Naive thymus-derived CD4-positive, alpha-beta T cell (primary cell): ENCODE measurements at regions of chr6 and their contacts with region 1.

Region 1: GRCh38 chr6:27479319-27480182 is 6.6 kb upstream of the ZNF184 start:
- DNase-seq: peak; percentile 84 to 97 (median 95)
- ATAC-seq: peak; percentile 83
- H3K4me3 ChIP-seq: peak overlapping the region; percentile 95
- H3K4me3 Mint-ChIP-seq: no peak overlapping the region
- H3K27ac ChIP-seq: peak overlapping the region; percentile 97
- H3K27ac Mint-ChIP-seq: no peak overlapping the region
- H3K4me1 ChIP-seq: peaks cover 9 to 12% of the 10 kb centered on the region in 2 donors
- H3K4me1 Mint-ChIP-seq: peaks cover 0 to 9% (median 5%) of the 10 kb centered on the region in 7 donors
- H3K27me3 ChIP-seq: no peaks in the 10 kb centered on the region
- H3K27me3 Mint-ChIP-seq: peaks cover 0 to 17% (median 0%) of the 10 kb centered on the region in 5 donors

Region 2: DNA sequence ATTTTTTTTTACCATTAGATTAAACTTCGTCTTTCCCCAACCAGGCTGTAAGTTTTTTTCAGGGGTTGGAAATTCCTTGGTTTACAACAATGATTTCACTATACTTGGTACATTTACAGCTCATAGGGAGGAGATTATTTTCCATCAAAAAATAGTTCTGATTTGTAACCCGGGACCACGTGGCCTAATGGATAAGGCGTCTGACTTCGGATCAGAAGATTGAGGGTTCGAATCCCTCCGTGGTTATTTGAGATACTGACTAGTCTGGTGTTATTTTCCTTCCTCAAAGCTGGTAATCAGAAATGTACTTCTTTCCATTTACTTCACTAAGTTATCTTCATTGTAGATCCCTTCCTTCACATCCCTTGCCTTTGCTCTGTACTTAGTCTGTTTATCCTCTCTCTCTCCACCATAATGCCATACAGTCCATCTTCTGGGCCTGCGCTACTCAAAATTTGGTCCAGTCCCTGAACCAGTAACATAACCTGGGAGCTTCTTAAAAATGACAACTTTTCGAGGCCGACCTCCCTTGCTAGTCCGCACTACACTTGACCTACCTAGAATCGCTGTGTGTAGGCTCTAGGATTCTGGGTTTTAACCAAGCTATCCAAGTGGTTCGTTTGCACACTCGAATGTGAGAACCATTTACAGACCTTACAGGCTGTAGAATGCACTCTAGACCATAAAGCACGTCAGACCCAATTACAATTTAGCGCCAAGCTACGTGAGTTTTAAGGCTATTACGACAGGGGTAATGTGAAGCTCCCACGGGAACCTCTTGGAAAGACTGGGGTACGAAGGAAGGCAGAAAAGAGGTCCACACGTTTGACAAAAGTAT is 1156.7 kb before region 1 on chr6:
- CTCF ChIA-PET with region 1: no interaction called
- POLR2A ChIA-PET with region 1: no interaction called
- intact Hi-C with region 1: loop called in 1 of 2 experiments (anchors 5 kb)
- DNase-seq: peak in 8 of 9 donors; percentile 67 to 85 (median 79)
- ATAC-seq: peak; percentile 72
- H3K4me3 ChIP-seq: peak overlapping the region; percentile 82
- H3K4me3 Mint-ChIP-seq: peak overlapping the region; percentile 64 to 92 (median 88)
- H3K27ac ChIP-seq: peak overlapping the region; percentile 60
- H3K27ac Mint-ChIP-seq: peak overlapping the region; percentile 44 to 93 (median 89)
- H3K4me1 ChIP-seq: peaks cover 5 to 8% of the 10 kb centered on the region in 2 donors
- H3K4me1 Mint-ChIP-seq: peaks cover 2 to 58% (median 36%) of the 10 kb centered on the region in 7 donors
- H3K27me3 ChIP-seq: no peaks in the 10 kb centered on the region
- H3K27me3 Mint-ChIP-seq: peaks cover 5 to 21% (median 17%) of the 10 kb centered on the region in 5 donors

Region 3: DNA sequence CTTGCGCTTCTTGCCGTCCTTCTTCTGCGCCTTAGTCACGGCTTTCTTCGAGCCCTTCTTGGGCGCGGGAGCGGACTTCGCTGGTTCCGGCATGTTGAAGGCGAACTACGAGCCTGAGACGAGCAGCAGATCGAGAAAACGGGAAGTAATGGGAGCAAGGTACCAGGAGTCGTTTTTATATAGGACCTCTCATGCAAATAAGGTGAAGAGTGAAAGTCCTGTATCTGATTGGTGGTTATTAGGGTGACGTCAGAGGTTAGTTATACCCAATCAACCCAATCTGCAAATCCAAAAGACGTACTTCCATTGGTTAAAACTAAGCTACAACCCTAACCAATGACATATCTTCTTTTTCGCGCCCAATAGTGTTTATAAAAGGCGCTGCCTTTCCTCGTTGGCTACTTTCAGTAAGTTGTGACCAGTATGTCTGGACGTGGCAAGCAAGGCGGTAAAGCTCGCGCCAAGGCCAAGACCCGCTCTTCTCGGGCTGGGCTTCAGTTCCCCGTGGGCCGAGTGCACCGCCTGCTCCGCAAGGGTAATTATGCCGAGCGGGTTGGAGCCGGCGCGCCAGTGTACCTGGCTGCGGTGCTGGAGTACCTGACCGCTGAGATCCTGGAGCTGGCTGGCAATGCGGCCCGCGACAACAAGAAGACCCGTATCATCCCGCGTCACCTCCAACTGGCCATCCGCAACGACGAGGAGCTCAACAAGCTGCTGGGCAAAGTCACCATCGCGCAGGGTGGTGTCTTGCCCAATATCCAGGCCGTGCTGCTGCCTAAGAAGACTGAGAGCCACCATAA is 332.6 kb before region 1 on chr6:
- CTCF ChIA-PET with region 1: no interaction called
- POLR2A ChIA-PET with region 1: interaction called, 8 read pairs
- intact Hi-C with region 1: loop called (anchors 5 kb)
- DNase-seq: peak; percentile 71 to 96 (median 92)
- ATAC-seq: peak; percentile 92
- H3K4me3 ChIP-seq: peak overlapping the region; percentile 90
- H3K4me3 Mint-ChIP-seq: no peak overlapping the region
- H3K27ac ChIP-seq: peak overlapping the region; percentile 89
- H3K27ac Mint-ChIP-seq: no peak overlapping the region
- H3K4me1 ChIP-seq: peaks cover 6 to 7% of the 10 kb centered on the region in 2 donors
- H3K4me1 Mint-ChIP-seq: peaks cover 0 to 26% (median 14%) of the 10 kb centered on the region in 7 donors
- H3K27me3 ChIP-seq: no peaks in the 10 kb centered on the region
- H3K27me3 Mint-ChIP-seq: no peaks in the 10 kb centered on the region

Region 4: DNA sequence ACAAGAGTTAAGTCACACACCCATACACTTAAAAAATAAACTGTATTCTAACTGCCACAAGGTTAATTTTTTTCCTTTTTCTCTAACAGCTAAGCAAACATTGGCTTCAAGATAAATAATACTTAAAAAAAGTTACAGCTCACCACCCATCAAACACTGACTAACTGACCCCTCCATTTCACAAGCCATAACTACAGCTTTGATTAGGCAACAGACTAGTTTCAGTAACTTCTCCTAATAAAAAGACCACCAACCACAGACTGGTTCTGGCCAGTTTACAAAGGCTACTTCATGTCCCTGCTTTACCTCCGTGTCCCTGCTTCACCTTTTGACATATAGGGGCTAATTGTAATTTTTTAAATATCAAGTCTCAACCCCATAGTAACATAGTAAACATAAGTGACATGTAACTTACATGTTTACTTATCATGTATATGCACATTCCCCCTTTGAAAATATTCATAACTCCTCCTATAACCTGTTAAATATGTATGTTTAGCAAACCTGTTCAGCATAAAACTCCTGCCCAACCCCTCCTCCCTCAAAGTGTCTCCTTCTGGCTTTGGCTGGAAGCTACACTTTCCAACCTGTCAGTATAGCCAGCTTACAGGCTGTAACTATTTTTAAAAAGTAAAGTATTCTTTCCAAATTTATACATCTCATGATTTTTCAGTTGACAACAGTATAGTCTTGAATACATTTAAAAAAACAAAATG is 152.4 kb before region 1 on chr6:
- CTCF ChIA-PET with region 1: no interaction called
- POLR2A ChIA-PET with region 1: no interaction called
- intact Hi-C with region 1: no loop called
- DNase-seq: no peak
- ATAC-seq: no peak
- H3K4me3 ChIP-seq: no peak overlapping the region
- H3K4me3 Mint-ChIP-seq: no peak overlapping the region
- H3K27ac ChIP-seq: no peak overlapping the region
- H3K27ac Mint-ChIP-seq: no peak overlapping the region
- H3K4me1 ChIP-seq: no peaks in the 10 kb centered on the region
- H3K4me1 Mint-ChIP-seq: peaks cover 0 to 4% (median under 1%) of the 10 kb centered on the region in 7 donors
- H3K27me3 ChIP-seq: peaks cover 2 to 3% of the 10 kb centered on the region in 2 donors
- H3K27me3 Mint-ChIP-seq: peaks cover 22 to 66% (median 50%) of the 10 kb centered on the region in 5 donors

Region 5: GRCh38 chr6:27388293-27389197 is 91.0 kb before region 1 on chr6 and contains the start of gene ZNF391:
- CTCF ChIA-PET with region 1: no interaction called
- POLR2A ChIA-PET with region 1: interaction called, 10 read pairs
- intact Hi-C with region 1: loop called (anchors 1 to 2 kb)
- DNase-seq: peak; percentile 46 to 77 (median 67)
- ATAC-seq: peak; percentile 90
- H3K4me3 ChIP-seq: peak within 1 kb of the TSS; percentile 92
- H3K4me3 Mint-ChIP-seq: peak within 1 kb of the TSS; percentile 95 to 99 (median 98)
- H3K27ac ChIP-seq: peak within 1 kb of the TSS; percentile 78
- H3K27ac Mint-ChIP-seq: peak within 1 kb of the TSS; percentile 85 to 96 (median 93)
- H3K4me1 ChIP-seq: peaks cover 4 to 9% of the 10 kb centered on the region in 2 donors
- H3K4me1 Mint-ChIP-seq: peaks cover 9 to 31% (median 18%) of the 10 kb centered on the region in 7 donors
- H3K27me3 ChIP-seq: no peaks in the 10 kb centered on the region
- H3K27me3 Mint-ChIP-seq: peaks cover 0 to 9% (median 2%) of the 10 kb centered on the region in 5 donors
- total RNA-seq, gene ZNF391: 0.19 to 5.7 (median 3.3) TPM

Region 6: DNA sequence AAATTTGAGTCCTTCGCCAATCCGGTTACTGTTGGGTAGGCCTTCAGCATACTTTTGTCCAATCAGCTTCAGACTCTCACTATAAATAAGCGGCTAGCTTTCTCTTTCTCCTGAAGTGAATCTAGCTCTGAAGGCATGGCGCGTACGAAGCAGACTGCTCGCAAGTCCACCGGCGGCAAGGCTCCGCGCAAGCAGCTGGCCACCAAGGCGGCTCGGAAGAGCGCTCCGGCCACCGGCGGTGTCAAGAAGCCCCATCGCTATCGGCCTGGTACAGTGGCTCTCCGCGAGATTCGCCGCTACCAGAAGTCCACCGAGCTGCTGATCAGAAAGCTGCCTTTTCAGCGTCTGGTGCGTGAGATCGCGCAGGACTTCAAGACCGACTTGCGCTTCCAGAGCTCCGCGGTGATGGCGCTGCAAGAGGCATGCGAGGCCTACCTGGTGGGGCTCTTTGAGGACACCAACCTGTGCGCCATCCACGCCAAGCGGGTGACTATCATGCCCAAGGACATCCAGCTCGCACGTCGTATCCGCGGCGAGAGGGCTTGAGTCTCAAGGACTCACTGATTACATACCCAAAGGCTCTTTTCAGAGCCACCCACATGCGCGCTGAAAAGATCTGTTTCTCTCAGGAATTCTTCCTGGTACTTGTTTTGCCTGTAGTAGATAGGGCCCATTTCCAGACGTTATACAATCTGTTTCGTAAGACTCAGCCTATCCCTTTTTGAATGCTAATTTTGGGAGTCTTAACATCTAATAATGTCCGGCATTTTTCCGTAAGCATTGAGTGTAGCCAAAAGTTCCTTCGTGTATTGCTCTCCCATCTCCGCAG is 330.6 kb after region 1 on chr6:
- CTCF ChIA-PET with region 1: no interaction called
- POLR2A ChIA-PET with region 1: interaction called, 21 read pairs
- intact Hi-C with region 1: loop called (anchors 1 to 5 kb)
- DNase-seq: peak; percentile 66 to 96 (median 92)
- ATAC-seq: peak; percentile 71
- H3K4me3 ChIP-seq: peak overlapping the region; percentile 76
- H3K4me3 Mint-ChIP-seq: peak overlapping the region; percentile 81 to 97 (median 94)
- H3K27ac ChIP-seq: peak overlapping the region; percentile 86
- H3K27ac Mint-ChIP-seq: peak overlapping the region; percentile 95 to 99 (median 98)
- H3K4me1 ChIP-seq: peaks cover 20 to 42% of the 10 kb centered on the region in 2 donors
- H3K4me1 Mint-ChIP-seq: peaks cover 18 to 82% (median 61%) of the 10 kb centered on the region in 7 donors
- H3K27me3 ChIP-seq: no peaks in the 10 kb centered on the region
- H3K27me3 Mint-ChIP-seq: peaks cover 0 to 9% (median 0%) of the 10 kb centered on the region in 5 donors

Region 7: DNA sequence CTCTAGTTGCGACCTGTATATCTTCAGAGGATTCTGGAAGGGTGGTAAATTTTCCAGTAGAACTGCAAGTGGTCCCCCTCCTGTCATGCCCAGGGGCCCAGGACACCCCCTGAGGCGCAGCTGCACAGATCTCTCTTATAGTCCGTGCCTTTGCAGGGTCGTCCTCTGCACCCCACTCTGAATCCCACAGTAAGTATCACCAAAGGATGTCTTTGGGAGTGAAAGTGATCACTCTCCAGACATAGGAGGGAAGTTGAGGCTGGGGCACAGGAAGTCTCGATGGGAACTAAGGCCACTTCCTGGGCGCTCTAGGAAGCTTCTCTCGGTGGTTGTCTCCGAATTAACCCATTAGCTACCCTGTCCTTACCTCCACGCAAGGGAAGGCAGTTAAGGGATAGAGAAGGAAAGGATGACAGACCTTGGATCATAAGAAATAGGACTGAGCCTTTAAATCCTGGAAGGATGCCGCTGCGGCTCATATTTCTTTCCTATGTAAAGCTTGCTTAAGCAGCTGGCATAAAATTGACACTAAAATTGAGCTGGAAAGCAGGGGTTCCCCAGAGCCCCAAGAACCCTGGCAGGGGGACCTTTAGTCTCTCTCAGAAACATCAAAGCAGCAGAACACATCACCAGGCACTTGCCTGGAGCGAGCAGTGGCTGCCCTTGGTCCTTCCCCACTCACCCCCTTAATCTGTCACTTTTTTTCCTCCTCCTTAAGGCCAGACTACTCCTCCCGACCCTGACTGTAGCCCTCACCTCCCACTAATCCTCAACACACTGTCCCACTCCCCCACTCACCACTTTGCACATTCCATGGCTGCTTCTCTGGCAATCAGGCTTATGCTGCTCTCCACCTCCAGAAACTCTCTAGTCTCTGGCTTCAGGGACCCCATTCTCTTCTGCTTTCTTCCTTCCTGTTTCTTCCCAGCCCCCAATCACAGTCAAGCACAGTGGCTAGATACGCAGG is 772.7 kb after region 1 on chr6 and contains the start of gene ZKSCAN4:
- CTCF ChIA-PET with region 1: no interaction called
- POLR2A ChIA-PET with region 1: no interaction called
- intact Hi-C with region 1: loop called in 1 of 2 experiments (anchors 1 kb)
- DNase-seq: peak; percentile 44 to 86 (median 78)
- ATAC-seq: peak; percentile 96
- H3K4me3 ChIP-seq: peak within 1 kb of the TSS; percentile 100
- H3K4me3 Mint-ChIP-seq: peak within 1 kb of the TSS; percentile 84 to 100 (median 98)
- H3K27ac ChIP-seq: peak within 1 kb of the TSS; percentile 55
- H3K27ac Mint-ChIP-seq: peak within 1 kb of the TSS; percentile 85 to 98 (median 92)
- H3K4me1 ChIP-seq: peaks cover 14 to 18% of the 10 kb centered on the region in 2 donors
- H3K4me1 Mint-ChIP-seq: peaks cover 21 to 53% (median 39%) of the 10 kb centered on the region in 7 donors
- H3K27me3 ChIP-seq: no peaks in the 10 kb centered on the region
- H3K27me3 Mint-ChIP-seq: peaks cover 0 to 4% (median 0%) of the 10 kb centered on the region in 5 donors
- total RNA-seq, gene ZKSCAN4: 2.8 to 11.8 (median 8.7) TPM

Region 8: GRCh38 chr6:28981833-28982475 is 1502.4 kb after region 1 on chr6:
- CTCF ChIA-PET with region 1: no interaction called
- POLR2A ChIA-PET with region 1: no interaction called
- intact Hi-C with region 1: loop called in 1 of 2 experiments (anchors 2 kb)
- DNase-seq: peak; percentile 48 to 89 (median 86)
- ATAC-seq: peak; percentile 81
- H3K4me3 ChIP-seq: peak overlapping the region; percentile 99
- H3K4me3 Mint-ChIP-seq: peak overlapping the region; percentile 85 to 100 (median 92)
- H3K27ac ChIP-seq: peak overlapping the region; percentile 47
- H3K27ac Mint-ChIP-seq: peak overlapping the region; percentile 87 to 100 (median 99)
- H3K4me1 ChIP-seq: peaks cover 7 to 18% of the 10 kb centered on the region in 2 donors
- H3K4me1 Mint-ChIP-seq: peaks cover 30 to 80% (median 66%) of the 10 kb centered on the region in 7 donors
- H3K27me3 ChIP-seq: no peaks in the 10 kb centered on the region
- H3K27me3 Mint-ChIP-seq: peaks cover 14 to 61% (median 36%) of the 10 kb centered on the region in 5 donors